ENCODE measurements at regions of chr20 and their contacts with region 1.

Region 1: DNA sequence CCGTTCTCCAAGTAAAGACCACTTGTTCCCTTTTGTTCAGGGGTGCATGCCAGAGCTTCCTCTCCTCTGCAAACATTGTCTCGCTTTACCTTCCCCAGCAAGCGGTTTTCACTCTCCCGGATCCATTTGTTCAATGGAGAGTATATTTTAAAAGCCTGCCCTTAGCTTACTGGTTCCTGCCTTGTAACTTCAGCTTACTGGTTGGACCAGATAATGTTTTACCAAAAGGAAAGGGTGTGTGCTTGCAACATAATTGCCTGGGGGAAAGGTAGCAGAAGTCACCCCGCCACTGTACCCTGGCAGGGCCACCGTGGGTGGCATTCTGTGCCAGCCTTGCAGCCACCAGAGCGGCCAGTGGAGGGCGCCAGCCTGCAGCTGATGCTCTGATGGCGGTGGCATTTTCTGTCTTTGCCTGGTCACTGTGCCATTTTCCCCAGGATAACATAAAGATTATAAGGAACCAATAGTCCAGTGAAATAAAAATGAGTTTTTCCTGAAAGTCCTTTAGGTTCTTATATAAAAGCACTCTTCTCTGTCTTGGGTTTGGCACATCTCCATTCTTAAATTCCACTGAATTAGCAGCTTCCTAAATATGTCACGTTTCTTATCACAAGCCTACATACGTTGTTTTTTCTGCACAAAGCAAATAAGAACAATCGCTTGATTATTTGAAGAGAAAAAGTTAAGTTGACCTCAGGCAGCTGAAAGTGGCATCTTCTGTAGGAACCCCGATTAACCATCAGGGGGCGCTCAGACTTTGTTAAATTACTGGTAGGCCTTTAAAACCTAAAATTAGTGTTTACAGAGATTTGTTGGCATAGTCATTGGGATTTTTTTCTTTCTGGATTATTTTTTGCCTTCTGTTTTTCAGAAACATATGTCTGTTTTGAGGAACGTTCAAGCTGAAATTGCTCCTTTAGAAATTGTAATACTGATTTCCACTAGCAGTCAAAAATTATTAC is 67.4 kb upstream of the XRN2 start:
- DNase-seq: peak; percentile 83
- H3K4me3 Mint-ChIP-seq: no peak overlapping the region
- H3K27ac Mint-ChIP-seq: no peak overlapping the region
- H3K4me1 Mint-ChIP-seq: no peaks in the 10 kb centered on the region
- H3K27me3 Mint-ChIP-seq: no peaks in the 10 kb centered on the region

Region 2: GRCh38 chr20:20860078-20860806 is 375.5 kb before region 1 on chr20:
- CTCF ChIA-PET with region 1: interaction called, 5 read pairs
- intact Hi-C with region 1: loop called (anchors 1 kb)
- DNase-seq: peak; percentile 95
- H3K4me3 Mint-ChIP-seq: no peak overlapping the region
- H3K27ac Mint-ChIP-seq: no peak overlapping the region
- H3K4me1 Mint-ChIP-seq: no peaks in the 10 kb centered on the region
- H3K27me3 Mint-ChIP-seq: peaks cover 20% of the 10 kb centered on the region

Region 3: GRCh38 chr20:21352703-21353102 is 116.9 kb after region 1 on chr20:
- CTCF ChIA-PET with region 1: interaction called, 10 read pairs
- intact Hi-C with region 1: no loop called
- DNase-seq: no peak
- H3K4me3 Mint-ChIP-seq: no peak overlapping the region
- H3K27ac Mint-ChIP-seq: no peak overlapping the region
- H3K4me1 Mint-ChIP-seq: no peaks in the 10 kb centered on the region
- H3K27me3 Mint-ChIP-seq: no peaks in the 10 kb centered on the region

Region 4: DNA sequence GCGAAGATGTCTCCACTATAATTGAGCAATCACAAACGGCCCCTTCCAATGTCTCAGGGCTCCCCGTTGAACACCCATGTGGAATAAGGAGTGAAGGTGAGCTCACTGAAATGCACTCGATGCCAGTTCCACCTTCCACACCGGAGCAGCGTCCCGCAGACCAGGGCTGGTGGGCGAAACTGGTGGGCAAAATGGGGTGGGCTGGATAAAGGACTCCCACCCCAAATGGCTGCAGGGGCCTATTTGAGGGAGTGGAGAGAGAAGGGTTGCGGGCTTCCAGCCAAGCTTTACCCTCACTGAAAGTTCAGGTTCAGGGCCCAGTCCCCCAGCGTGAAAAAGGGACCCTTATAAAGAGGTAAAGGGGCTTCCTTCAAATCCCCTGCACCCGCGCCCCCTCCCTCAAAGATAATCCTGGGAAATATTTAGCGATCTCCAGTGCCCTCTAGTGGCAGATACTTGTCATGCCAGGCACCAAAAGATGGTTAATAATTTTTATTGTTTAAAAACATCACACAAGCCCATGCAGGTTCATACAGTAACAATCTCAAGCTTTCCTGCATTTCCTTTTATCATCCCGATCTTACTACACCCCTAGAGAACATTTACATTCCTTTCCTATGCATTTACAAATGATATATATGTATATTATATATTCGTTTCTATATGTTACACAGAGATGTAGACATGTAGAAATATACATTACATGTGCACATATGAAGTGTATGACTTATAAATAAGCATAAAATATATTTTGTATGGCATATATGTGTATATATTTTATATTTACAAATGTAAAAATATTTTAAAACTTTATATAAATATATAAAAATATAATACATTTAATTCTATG is 336.3 kb after region 1 on chr20:
- CTCF ChIA-PET with region 1: interaction called, 17 read pairs
- intact Hi-C with region 1: loop called (anchors 1 kb)
- DNase-seq: peak; percentile 26
- H3K4me3 Mint-ChIP-seq: no peak overlapping the region
- H3K27ac Mint-ChIP-seq: no peak overlapping the region
- H3K4me1 Mint-ChIP-seq: peaks cover 7% of the 10 kb centered on the region
- H3K27me3 Mint-ChIP-seq: peaks cover 7% of the 10 kb centered on the region

Measured in activated naive CD4-positive, alpha-beta T cell treated with anti-CD3 and anti-CD28 coated beads for 36 hours (primary cell).